Left cardiac atrium (tissue), 4 donors: ENCODE measurements at regions of chr11 and their contacts with region 1.

Region 1: GRCh38 chr11:44727373-44728287 is 868 bp downstream of the TSPAN18 start:
- DNase-seq: peak; percentile 93
- ATAC-seq: peak; percentile 79 to 89

Region 2: GRCh38 chr11:44621140-44621681 is 106.4 kb before region 1 on chr11:
- intact Hi-C with region 1: loop called in 1 of 2 experiments (anchors 5 kb)
- DNase-seq: peak; percentile 82
- ATAC-seq: peak; percentile 74 to 80

Region 3: DNA sequence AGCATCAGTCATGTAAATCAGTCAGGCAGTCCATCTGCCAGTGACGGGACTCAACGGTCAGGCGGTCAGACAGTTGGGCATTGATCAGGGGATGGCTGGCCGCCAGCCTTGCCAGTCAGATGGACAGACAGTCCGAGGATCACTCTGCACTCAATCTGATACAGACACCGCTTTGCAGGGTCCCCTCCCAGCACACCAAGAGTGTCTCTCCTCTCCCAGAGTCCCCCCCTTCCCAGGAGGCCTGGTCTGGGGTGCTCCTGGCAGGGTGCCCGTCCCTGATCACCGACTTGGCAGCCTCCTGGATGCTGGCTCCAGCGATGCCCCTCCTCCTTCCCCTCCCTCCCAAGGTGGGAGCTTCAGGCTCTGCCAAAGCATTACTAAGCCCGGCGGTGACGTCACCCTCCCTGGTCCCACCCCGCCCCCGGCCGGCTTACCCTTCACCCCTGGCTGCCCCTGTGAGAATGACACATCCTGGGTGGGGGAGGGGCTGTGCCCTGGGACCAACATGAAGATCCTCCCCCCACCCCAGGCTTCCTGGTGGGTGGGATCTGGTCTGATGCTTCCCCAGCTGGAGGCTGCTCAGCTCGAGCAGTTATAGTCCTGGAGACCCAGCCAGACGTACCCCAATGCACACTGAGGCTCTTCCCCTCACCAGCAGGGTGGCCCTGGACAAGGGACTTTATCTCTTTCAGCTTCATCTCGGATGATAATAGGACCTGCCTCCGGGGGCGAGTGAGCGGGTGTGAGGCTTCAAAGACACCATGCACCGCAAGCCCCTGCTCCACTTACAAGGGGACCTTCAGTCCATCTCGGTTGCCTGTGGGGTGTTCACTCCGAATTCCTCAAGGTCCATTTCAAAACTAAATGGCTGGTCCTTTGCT is 93.0 kb before region 1 on chr11:
- intact Hi-C with region 1: loop called in 1 of 2 experiments (anchors 5 kb)
- DNase-seq: peak; percentile 92
- ATAC-seq: peak; percentile 82 to 96

Region 4: GRCh38 chr11:44775366-44775984 is 47.8 kb after region 1 on chr11:
- intact Hi-C with region 1: loop called in 1 of 2 experiments (anchors 2 kb)
- DNase-seq: peak; percentile 58
- ATAC-seq: peak; percentile 27 to 58

Region 5: DNA sequence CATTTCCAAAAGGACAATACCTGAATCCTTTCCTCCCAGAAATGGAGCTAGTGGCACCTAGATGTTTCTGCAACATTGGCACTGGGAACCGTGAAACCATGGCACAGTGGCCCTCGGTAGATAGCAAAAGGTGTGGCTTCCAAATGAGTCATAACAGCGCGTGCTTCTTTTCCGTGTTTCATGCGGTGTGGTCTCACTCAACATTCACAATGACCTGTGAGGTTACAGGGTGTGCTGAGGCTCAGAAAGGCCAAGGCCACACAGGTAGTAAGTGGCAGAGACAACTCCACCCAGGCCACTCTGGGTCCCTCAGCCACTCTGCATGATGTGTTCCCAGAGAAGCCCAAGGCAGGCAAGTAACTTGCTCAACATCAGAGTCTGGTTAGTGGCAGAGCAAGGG is 155.6 kb after region 1 on chr11:
- intact Hi-C with region 1: loop called in 1 of 2 experiments (anchors 5 kb)
- DNase-seq: no peak
- ATAC-seq: no peak

Region 6: DNA sequence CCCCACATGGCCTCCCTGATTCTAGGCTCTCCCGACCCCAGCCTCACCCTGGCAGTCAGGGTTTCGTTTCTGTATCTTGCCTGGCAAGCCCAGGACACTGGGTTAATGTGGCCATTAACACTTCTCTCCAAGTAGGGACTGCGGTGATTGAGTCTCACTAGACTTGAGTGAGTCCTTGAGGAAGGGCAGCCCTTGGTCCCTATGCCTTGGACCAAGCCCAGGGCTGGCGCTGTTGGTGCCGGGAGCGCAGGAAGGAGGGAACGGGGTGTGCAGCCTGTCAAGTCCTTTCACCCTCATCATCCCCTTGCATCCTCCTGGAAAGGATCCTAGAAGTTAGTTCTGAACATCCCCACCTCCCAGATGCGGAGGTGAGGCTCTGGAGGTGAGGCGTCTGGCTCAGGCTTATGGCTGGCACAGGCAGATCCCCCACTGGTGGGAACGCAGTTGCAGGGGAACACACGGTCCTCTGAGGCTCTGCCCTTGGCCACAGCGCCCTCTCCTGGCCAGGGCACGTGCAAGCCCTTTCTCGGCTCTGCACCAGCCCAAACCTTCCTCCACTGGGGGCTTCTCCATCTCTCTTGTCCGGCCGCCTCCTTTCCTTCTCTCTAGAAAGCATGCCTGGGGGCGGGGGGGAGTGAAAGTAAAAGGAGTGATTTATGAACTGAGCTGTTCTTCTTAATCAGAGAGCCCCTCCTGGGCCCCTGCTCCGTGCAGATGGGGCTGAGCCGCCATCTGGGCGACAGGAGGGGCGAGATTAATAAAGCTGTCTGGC is 166.4 kb after region 1 on chr11:
- intact Hi-C with region 1: loop called in 1 of 2 experiments (anchors 1 kb)
- DNase-seq: peak; percentile 80
- ATAC-seq: peak; percentile 89 to 93

Region 7: DNA sequence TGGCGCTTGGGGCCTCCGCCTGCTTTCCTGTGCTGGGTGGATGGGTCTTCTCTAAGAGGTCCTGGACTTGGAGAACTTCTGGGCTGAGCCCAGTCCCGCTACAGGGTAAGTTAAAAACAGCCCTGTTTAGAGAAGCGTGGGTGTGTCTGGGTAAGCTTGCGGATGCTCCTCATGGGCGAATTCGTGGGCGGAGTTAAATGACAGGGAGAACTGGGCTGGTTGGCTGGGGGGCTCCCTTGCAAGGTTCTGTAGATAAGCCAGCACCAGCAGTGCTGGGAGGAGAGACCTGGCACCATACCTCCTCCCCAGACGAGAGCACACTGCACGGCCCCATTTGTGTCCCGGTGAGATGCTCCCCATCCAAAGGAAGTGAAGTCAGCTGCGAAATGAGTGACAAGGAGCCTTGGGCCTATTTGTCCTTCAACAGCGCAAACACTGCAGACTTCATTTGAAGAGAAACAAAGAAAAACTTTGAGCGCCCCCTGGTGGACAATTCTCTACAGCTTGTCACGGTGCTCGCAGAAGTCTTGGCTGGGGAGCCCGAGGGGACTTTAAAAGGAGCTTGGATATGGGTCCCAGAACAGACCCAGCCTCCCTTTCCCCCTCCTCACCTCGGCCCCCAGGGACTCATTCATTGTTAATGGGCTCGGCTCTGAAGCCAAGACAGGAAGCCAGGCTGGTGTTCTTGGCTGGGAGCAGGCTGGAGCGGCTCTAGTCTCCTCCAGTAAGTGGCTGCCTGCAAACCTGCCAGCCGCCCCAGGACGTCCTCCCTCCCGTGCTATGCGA is 183.6 kb after region 1 on chr11:
- intact Hi-C with region 1: loop called (anchors 1 to 5 kb)
- DNase-seq: peak; percentile 91
- ATAC-seq: peak; percentile 78 to 86